Activated CD8-positive, alpha-beta T cell treated with anti-CD3 and anti-CD28 coated beads for 36 hours (primary cell): ENCODE measurements at regions of chr5 and their contacts with region 1.

Region 1: DNA sequence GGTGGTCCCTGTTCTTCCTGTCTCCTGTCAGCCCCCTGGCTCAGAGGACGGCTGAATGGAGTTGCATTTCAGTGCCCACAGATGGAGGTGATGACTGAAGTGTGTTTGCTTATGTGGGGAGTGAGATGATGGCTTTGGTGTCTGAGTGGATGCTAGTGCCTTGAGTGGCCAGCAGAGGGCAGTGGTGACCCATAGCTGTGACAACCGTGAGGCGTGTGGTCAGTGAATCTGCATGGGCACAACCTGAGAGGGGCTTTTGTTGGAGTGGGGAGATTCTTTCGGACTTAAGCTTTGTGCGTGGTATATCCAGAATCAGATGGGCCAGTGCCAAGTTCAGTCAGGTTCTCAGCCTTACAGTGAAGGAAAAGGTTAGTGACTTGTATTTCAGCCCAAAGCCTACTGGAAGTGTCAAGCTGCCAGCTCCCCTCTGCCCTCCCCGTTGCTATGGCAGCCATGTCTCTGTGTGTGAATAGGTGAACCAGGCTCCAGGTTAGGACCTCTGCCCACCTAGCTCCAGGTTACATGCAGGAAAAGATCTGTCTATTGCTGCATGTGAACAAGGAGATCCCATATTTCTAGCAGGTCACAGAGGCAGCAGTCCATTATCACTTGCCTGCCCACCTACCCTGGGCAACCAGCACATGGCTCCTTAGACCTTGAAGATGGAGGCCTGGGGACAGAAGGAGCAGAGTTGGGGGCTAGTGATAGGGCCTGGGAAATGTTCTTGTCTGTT is 14.7 kb upstream of the CXXC5 start:
- DNase-seq: peak; percentile 73
- ATAC-seq: peak; percentile 31
- H3K4me3 Mint-ChIP-seq: no peak overlapping the region
- H3K27ac Mint-ChIP-seq: peak overlapping the region; percentile 43
- H3K4me1 Mint-ChIP-seq: peaks cover 46% of the 10 kb centered on the region
- H3K27me3 Mint-ChIP-seq: no peaks in the 10 kb centered on the region
- CTCF ChIP-seq: peak; percentile 91

Region 2: GRCh38 chr5:139474890-139475791 is 158.3 kb before region 1 on chr5:
- CTCF ChIA-PET with region 1: no interaction called
- POLR2A ChIA-PET with region 1: no interaction called
- intact Hi-C with region 1: no loop called
- DNase-seq: peak; percentile 24
- ATAC-seq: no peak
- H3K4me3 Mint-ChIP-seq: no peak overlapping the region
- H3K27ac Mint-ChIP-seq: peak overlapping the region; percentile 64
- H3K4me1 Mint-ChIP-seq: peaks cover 62% of the 10 kb centered on the region
- H3K27me3 Mint-ChIP-seq: no peaks in the 10 kb centered on the region
- CTCF ChIP-seq: no peak

Region 3: DNA sequence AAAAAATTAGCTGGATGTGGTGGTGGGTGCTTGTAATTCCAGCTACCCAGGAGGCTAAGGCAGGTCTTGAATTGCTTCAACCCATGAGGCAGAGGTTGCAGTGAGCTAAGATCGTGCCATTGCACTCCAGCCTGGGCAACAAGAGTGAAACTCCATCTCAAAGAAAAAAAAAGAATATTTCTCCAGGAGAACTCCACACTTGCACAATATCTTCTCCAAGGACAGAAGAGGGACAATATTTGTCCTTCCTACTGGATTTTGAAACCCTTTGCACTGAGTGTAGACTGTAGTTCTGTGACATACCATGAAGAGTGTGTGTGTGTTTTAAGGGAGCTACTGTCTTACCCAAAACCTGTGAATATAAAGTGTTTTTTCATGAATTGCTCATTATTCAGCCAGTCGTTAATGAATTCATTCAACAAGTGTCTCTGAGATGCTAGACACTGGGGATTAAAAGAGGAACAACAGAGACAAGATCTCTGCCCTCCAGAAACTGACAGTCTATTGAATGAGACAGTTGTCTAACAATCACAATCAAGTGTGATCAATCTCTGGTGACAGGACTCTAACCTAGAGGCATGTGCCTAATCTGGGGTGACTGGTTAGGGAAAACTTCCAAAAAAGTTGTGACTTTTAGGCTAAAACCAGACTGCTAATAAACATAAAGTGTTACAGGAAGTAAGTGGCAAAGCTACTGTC is 82.1 kb before region 1 on chr5:
- CTCF ChIA-PET with region 1: no interaction called
- POLR2A ChIA-PET with region 1: no interaction called
- intact Hi-C with region 1: no loop called
- DNase-seq: no peak
- ATAC-seq: no peak
- H3K4me3 Mint-ChIP-seq: no peak overlapping the region
- H3K27ac Mint-ChIP-seq: no peak overlapping the region
- H3K4me1 Mint-ChIP-seq: peaks cover 3% of the 10 kb centered on the region
- H3K27me3 Mint-ChIP-seq: no peaks in the 10 kb centered on the region
- CTCF ChIP-seq: no peak

Region 4: GRCh38 chr5:139611703-139612584 is 21.5 kb before region 1 on chr5:
- CTCF ChIA-PET with region 1: interaction called, 11 read pairs
- POLR2A ChIA-PET with region 1: interaction called, 3 read pairs
- intact Hi-C with region 1: no loop called
- DNase-seq: peak; percentile 23
- ATAC-seq: peak; percentile 79
- H3K4me3 Mint-ChIP-seq: no peak overlapping the region
- H3K27ac Mint-ChIP-seq: peak overlapping the region; percentile 72
- H3K4me1 Mint-ChIP-seq: peaks cover 32% of the 10 kb centered on the region
- H3K27me3 Mint-ChIP-seq: no peaks in the 10 kb centered on the region
- CTCF ChIP-seq: no peak

Region 5: DNA sequence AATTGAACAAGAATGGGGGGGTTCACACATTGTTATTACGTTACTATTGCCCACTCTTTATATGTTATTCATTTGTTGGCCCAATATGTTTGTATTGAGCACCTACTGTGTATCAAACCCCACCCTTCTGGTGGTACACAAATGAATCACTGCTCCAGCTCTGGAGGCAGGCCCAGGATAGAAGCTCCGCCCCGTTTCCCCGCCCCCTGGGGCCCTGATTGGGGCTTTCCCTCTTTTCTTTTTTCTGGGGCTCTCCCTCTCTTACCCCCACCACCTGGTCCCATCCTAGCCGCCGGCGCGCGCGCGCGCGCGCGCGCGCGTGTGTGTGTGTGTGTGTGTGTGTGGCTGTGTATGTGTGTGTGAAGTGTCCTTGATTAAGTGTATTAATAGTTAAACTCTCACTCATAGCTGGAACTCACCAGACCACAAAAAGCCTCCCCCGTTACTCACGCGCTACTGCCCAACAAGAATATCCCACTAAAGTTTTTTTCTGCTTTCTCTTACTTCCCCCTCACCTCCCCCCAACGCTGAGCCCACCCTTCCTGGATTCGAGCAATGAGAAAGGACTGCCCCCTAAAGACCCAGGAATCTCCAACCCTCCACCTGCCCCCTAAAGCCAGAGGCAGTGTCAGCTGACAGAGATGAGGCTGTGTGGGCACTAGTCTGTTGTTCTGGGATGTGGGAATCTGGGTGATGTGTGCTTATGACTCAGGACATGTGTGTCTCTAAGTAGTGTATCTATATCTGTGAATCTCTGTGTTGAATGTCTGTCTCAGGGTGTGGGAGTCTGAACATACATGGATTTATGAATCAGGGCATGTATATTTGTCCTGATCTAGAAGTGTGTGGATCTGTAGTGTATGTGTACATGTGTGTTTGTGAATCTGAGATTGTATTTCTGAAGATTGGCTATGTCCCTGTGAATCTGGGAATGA is 18.7 kb after region 1 on chr5:
- CTCF ChIA-PET with region 1: interaction called, 40 read pairs
- POLR2A ChIA-PET with region 1: interaction called, 87 read pairs
- intact Hi-C with region 1: loop called (anchors 1 kb)
- DNase-seq: peak; percentile 92
- ATAC-seq: peak; percentile 72
- H3K4me3 Mint-ChIP-seq: peak overlapping the region; percentile 7
- H3K27ac Mint-ChIP-seq: peak overlapping the region; percentile 17
- H3K4me1 Mint-ChIP-seq: peaks cover 48% of the 10 kb centered on the region
- H3K27me3 Mint-ChIP-seq: peaks cover 34% of the 10 kb centered on the region
- CTCF ChIP-seq: no peak

Region 6: GRCh38 chr5:139684881-139685749 is 51.7 kb after region 1 on chr5:
- CTCF ChIA-PET with region 1: interaction called, 94 read pairs
- POLR2A ChIA-PET with region 1: interaction called, 14 read pairs
- intact Hi-C with region 1: loop called (anchors 2 kb)
- DNase-seq: no peak
- ATAC-seq: no peak
- H3K4me3 Mint-ChIP-seq: no peak overlapping the region
- H3K27ac Mint-ChIP-seq: no peak overlapping the region
- H3K4me1 Mint-ChIP-seq: peaks cover 20% of the 10 kb centered on the region
- H3K27me3 Mint-ChIP-seq: no peaks in the 10 kb centered on the region
- CTCF ChIP-seq: no peak

Region 7: GRCh38 chr5:139711067-139711905 is 77.8 kb after region 1 on chr5:
- CTCF ChIA-PET with region 1: interaction called, 52 read pairs
- POLR2A ChIA-PET with region 1: interaction called, 9 read pairs
- intact Hi-C with region 1: no loop called
- DNase-seq: peak; percentile 79
- ATAC-seq: peak; percentile 78
- H3K4me3 Mint-ChIP-seq: peak overlapping the region; percentile 60
- H3K27ac Mint-ChIP-seq: no peak overlapping the region
- H3K4me1 Mint-ChIP-seq: peaks cover 21% of the 10 kb centered on the region
- H3K27me3 Mint-ChIP-seq: no peaks in the 10 kb centered on the region
- CTCF ChIP-seq: peak; percentile 57

Region 8: GRCh38 chr5:139774980-139775661 is 141.7 kb after region 1 on chr5:
- CTCF ChIA-PET with region 1: interaction called, 12 read pairs
- POLR2A ChIA-PET with region 1: interaction called, 3 read pairs
- intact Hi-C with region 1: no loop called
- DNase-seq: peak; percentile 93
- ATAC-seq: peak; percentile 100
- H3K4me3 Mint-ChIP-seq: peak overlapping the region; percentile 14
- H3K27ac Mint-ChIP-seq: peak overlapping the region; percentile 29
- H3K4me1 Mint-ChIP-seq: peaks cover 5% of the 10 kb centered on the region
- H3K27me3 Mint-ChIP-seq: peaks cover 6% of the 10 kb centered on the region
- CTCF ChIP-seq: peak; percentile 94